ENCODE measurements at regions of chr7 and their contacts with region 1.

Region 1: DNA sequence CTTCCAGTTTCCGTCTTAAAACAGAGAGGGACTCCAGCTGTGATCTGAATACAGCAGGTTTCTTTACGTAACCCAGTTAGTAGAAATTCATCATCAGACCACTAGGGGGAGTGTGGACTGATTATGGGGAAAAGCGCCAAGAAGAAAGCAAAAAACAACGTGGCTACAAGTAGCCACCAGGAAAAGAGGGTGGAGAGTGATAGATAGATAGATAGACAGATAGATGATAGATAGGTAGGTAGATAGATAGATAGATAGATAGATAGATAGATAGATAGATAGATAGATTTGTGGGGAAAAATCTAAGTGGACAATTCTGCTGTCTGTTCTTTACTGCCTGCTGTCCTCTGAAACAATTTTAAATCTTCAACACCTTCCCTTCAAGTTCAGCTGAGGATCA is 12.7 kb upstream of the AKR1B10 start:
- H3K4me3 Mint-ChIP-seq: no peak overlapping the region
- H3K27ac Mint-ChIP-seq: no peak overlapping the region
- H3K4me1 Mint-ChIP-seq: peaks cover 5% of the 10 kb centered on the region
- H3K27me3 Mint-ChIP-seq: peaks cover 11% of the 10 kb centered on the region

Region 2: DNA sequence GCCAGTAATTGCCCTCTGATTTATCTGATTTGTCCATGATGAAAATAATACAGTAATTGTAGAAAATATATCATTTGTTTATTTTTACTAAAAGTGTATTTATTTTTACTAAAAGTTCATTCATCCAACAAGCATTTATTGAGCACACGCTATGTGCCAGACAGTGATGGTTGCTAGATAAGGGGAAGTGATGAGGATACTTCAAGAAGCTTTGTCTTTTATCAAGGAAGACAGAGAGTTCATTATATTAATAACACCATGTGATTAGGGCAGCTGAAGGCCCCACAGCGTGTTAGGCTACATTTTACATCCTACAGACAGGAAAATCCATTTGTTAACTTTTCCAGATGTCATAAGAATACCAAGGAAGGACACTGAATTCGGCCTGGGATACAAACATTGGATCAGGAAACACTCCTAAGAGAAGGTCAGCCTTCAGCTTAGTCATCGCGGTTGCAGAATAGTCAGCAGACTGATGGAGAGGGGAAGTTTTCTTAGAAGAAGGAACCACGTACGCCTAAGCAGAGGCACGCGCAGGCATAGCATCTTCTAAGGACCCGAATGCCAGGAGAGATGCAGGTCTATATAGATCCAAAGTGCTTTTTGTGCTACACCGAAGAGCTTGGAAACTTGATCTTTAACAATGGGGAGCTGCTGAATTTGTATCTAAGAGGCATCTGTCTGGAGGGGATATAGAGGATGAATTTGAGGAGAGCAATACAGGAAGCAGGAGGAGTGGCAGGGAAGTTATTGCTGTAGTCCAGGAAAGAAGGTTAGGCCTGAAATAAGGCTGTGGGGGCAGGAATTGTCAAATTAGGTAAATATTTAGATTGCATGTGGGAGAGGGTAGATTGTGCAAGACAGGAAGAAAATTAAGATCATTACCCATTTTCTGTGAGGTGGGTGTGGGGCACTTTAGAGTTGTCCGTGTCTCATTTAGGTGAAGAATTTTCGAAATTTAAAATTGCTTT is 301.8 kb before region 1 on chr7:
- intact Hi-C with region 1: no loop called
- H3K4me3 Mint-ChIP-seq: no peak overlapping the region
- H3K27ac Mint-ChIP-seq: peak overlapping the region; percentile 50
- H3K4me1 Mint-ChIP-seq: peaks cover 25% of the 10 kb centered on the region
- H3K27me3 Mint-ChIP-seq: peaks cover 7% of the 10 kb centered on the region

Region 3: GRCh38 chr7:134432296-134433152 is 82.1 kb before region 1 on chr7:
- intact Hi-C with region 1: loop called (anchors 1 kb)
- H3K4me3 Mint-ChIP-seq: peak overlapping the region; percentile 70
- H3K27ac Mint-ChIP-seq: peak overlapping the region; percentile 87
- H3K4me1 Mint-ChIP-seq: peaks cover 27% of the 10 kb centered on the region
- H3K27me3 Mint-ChIP-seq: peaks cover 2% of the 10 kb centered on the region

Region 4: DNA sequence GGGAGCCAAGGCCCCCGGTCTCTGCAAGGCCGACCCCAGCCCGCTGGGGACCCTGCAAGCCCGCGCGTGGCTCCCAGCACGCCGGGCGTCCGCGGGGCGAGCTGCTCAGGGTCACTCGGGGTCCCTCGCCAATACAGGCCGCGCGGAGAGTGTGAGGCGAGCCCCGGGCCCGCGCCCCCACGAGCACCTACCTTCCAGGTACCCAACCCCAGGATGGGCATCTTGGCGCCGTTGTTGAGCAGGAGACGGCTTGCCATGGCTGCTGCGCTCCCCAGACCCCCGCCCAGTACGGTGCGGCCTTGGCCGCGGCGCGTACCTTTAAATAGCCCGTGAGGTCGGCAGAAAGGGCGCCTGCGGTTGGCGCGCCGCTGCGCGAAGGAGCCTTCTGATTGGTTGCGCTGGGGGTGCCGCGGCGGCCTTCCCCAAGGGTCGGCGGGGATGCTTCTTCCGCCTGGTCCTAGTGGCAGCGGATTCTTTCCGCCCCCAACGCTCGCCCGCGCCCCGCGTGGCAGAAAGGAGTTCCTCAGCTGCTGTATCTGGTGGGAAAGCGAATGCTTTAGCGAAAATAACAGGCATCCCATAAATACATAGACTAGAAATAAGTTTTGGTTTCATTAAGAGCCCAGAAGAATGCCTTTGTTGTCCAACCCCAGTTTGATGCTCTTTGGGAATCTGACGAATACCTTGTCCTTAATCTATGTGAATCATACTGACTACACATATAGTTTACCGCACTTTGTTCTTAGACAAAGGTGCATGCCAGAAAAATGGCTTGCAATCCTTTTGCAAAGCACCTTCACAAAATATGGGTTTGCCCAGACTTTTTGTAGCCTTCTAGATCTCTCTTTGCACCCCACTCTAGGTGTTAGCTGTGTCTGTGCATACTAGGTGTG is 55.6 kb before region 1 on chr7 and contains the start of gene AKR1B1:
- intact Hi-C with region 1: loop called (anchors 2 kb)
- H3K4me3 Mint-ChIP-seq: peak within 1 kb of the TSS; percentile 83
- H3K27ac Mint-ChIP-seq: peak within 1 kb of the TSS; percentile 78
- H3K4me1 Mint-ChIP-seq: peaks cover 40% of the 10 kb centered on the region
- H3K27me3 Mint-ChIP-seq: peaks cover 5% of the 10 kb centered on the region

Region 5: GRCh38 chr7:134605973-134606923 is 91.6 kb after region 1 on chr7:
- intact Hi-C with region 1: loop called (anchors 1 kb)
- H3K4me3 Mint-ChIP-seq: peak overlapping the region; percentile 21
- H3K27ac Mint-ChIP-seq: peak overlapping the region; percentile 45
- H3K4me1 Mint-ChIP-seq: peaks cover 10% of the 10 kb centered on the region
- H3K27me3 Mint-ChIP-seq: peaks cover 5% of the 10 kb centered on the region

Region 6: DNA sequence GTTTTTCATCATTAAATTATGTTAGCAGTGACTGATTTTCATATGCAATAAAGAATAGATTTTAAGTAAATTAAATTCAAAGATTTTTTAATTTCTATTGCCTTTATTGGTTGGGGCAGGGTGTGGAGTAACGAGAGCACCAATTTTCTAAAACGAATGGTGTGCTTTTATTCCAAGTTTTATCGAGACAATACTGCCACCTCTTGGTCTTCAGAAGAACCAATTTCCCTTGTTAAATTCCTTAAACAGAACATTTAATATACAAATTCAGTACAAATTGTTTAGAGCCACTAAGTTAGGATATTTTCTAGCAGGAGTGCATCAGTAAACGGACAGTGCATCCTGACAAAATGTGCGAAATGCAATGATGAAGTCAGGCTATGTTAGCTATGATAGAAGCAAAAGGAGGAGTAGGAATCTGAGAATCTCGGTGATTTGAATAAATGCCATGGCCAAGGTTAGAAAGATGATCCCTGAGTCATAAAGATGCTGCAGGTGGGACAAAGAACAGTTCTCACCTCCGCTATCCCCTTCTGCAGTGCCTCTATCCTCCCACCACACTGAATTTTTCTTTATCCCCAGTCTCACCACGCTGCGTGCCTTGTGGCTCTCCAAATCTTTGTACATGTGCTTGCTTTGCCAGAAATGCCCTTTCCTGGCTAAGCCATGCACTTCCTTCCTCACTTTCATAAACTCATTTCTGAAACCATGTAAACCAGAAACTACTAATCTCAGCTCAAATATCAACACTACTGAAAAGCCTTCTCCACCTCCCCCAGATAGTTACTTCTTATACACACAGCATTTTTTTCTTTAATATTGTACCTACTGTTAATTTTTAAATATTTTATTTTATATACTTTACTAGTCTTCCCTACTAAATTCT is 439.8 kb after region 1 on chr7:
- intact Hi-C with region 1: loop called (anchors 5 kb)
- H3K4me3 Mint-ChIP-seq: no peak overlapping the region
- H3K27ac Mint-ChIP-seq: no peak overlapping the region
- H3K4me1 Mint-ChIP-seq: no peaks in the 10 kb centered on the region
- H3K27me3 Mint-ChIP-seq: peaks cover 2% of the 10 kb centered on the region

Measured in dendritic cell treated with granulocyte-macrophage colony-stimulating factor and Interleukin-4, amounts not matched to agents 40 ng/mL and 50 ng/mL, for 4 days (primary cell).